PC-3 (cell line): ENCODE measurements at regions of chr3 and their contacts with region 1.

Region 1: GRCh38 chr3:155382396-155383042 is 89.0 kb upstream of the STRIT1 start:
- DNase-seq: peak; percentile 91
- ATAC-seq: peak; percentile 100
- H3K4me3 ChIP-seq: no peak overlapping the region
- H3K27ac ChIP-seq: no peak overlapping the region
- H3K4me1 ChIP-seq: peaks cover 6% of the 10 kb centered on the region
- H3K27me3 ChIP-seq: no peaks in the 10 kb centered on the region
- CTCF ChIP-seq: peak; percentile 94

Region 2: DNA sequence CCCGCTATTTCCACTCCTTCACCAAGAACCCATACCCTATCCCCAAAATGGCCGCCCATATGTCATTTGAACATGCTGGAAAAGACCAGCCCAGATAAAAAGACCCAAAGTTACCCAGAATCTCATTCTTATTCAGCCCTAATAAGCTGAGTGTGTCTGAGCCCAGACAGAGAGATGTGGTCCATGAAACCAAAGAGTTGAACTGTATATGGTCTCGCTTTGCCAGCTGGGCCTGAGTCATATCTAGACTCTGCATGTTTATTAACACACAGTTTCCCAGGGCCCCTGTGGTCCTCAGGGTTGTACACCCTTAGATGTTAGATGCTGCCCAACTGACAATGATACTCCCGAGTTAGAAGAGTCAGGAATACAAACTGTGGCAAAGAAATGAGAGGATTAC is 112.9 kb after region 1 on chr3:
- CTCF ChIA-PET with region 1: no interaction called
- POLR2A ChIA-PET with region 1: no interaction called
- intact Hi-C with region 1: loop called (anchors 10 kb)
- DNase-seq: no peak
- ATAC-seq: no peak
- H3K4me3 ChIP-seq: no peak overlapping the region
- H3K27ac ChIP-seq: no peak overlapping the region
- H3K4me1 ChIP-seq: peaks cover 15% of the 10 kb centered on the region
- H3K27me3 ChIP-seq: no peaks in the 10 kb centered on the region
- CTCF ChIP-seq: no peak

Region 3: GRCh38 chr3:155604126-155604525 is 221.6 kb after region 1 on chr3:
- CTCF ChIA-PET with region 1: interaction called, 10 read pairs
- POLR2A ChIA-PET with region 1: no interaction called
- intact Hi-C with region 1: no loop called
- DNase-seq: peak; percentile 66
- ATAC-seq: peak; percentile 88
- H3K4me3 ChIP-seq: no peak overlapping the region
- H3K27ac ChIP-seq: no peak overlapping the region
- H3K4me1 ChIP-seq: peaks cover 26% of the 10 kb centered on the region
- H3K27me3 ChIP-seq: no peaks in the 10 kb centered on the region
- CTCF ChIP-seq: no peak

Region 4: DNA sequence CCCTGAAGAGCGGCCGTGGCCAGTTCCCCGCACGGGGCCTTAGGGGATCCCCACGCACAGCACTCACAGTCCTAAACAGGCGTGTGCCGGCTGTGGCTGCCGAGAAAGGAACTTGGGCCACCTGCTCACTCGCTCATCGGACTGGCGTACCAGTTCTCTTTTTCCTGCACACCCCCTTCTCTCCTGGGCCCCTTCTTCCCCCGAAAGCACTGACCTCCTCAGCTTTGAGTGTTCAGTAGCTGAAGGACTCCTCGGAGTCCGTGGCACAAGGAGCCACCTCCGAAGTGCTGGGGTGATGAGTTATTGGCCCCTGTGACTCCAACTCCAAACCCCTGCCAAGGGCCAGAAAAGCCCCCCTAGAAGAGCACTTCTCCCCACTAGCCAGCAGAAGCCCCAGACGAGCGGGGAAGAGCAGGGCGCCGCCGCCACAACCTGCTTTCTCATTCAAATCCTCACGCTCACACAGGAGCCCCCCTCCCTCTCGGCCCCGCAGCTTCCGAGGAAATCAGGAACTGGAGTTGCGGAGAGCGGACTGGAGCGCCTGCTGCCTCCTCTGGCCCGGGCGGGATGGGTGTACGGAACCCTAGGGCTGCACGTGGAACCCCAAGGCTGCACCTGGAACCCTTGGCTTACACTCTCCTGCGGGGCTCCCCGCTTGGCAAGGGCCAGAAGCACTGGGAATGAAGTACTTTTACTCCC is 362.3 kb after region 1 on chr3 and contains the start of gene PLCH1:
- CTCF ChIA-PET with region 1: interaction called, 5 read pairs
- POLR2A ChIA-PET with region 1: no interaction called
- intact Hi-C with region 1: loop called (anchors 5 kb)
- DNase-seq: peak; percentile 81
- ATAC-seq: peak; percentile 59
- H3K4me3 ChIP-seq: peak within 1 kb of the TSS; percentile 91
- H3K27ac ChIP-seq: peak within 1 kb of the TSS; percentile 17
- H3K4me1 ChIP-seq: peaks cover 48% of the 10 kb centered on the region
- H3K27me3 ChIP-seq: no peaks in the 10 kb centered on the region
- CTCF ChIP-seq: no peak
- total RNA-seq, gene PLCH1: 4.1 and 4.5 TPM in 2 replicates